Caco-2 (cell line): ENCODE measurements at regions of chr4 and their contacts with region 1.

Region 1: DNA sequence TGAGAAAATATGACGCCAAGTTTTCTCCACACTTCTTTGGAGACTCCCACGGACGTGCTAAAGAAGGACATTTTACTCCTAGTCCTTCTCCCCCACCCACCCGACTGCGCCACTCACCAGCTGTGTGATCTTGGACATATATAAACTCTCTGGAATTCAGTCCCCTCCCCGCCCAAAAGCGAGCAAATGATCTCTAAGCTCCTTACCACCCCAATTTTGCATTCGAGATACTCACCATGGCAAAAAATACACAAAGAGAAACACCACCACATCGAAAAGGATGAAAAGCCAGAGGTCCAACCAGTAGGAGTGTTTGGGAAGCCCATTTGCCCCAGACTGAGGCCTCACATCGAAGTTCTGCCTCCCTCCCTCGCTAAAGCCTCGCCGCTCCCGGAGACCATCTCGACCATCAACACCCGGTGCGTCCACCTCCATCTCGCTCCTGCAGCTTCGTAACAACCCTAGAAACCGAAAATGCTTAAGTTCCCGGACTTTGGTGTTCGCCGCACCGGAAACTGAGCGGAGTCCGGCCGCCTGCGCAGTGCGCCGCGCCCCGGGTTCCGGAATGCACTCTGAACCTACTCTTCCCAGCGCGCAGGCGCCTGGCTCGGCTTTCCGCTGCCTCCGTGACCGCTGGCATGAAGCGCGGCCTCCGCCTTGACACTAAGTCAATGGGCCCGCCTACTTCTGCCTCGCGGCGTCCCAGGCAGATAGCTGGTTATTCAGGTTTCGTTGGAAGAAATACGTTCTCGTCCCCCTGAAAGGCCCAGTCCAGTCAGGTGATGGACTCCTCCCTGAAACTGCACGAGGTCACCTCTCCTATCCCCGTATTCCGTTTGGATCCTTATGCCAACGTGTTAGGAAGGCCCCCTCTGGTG is 21.6 kb downstream of the FABP2 start:
- DNase-seq: peak; percentile 97 to 98
- H3K4me3 ChIP-seq: peak overlapping the region; percentile 72
- H3K4me3 Mint-ChIP-seq: peak overlapping the region; percentile 99
- H3K27ac Mint-ChIP-seq: peak overlapping the region; percentile 99
- H3K4me1 ChIP-seq: no peaks in the 10 kb centered on the region
- H3K4me1 Mint-ChIP-seq: peaks cover 11% of the 10 kb centered on the region
- H3K27me3 ChIP-seq: no peaks in the 10 kb centered on the region
- H3K27me3 Mint-ChIP-seq: no peaks in the 10 kb centered on the region
- CTCF ChIP-seq: peak; percentile 36 to 41

Region 2: GRCh38 chr4:118810991-118811764 is 489.2 kb before region 1 on chr4:
- CTCF ChIA-PET with region 1: no interaction called
- POLR2A ChIA-PET with region 1: no interaction called
- intact Hi-C with region 1: no loop called
- DNase-seq: no peak
- H3K4me3 ChIP-seq: no peak overlapping the region
- H3K4me3 Mint-ChIP-seq: no peak overlapping the region
- H3K27ac Mint-ChIP-seq: no peak overlapping the region
- H3K4me1 ChIP-seq: no peaks in the 10 kb centered on the region
- H3K4me1 Mint-ChIP-seq: no peaks in the 10 kb centered on the region
- H3K27me3 ChIP-seq: no peaks in the 10 kb centered on the region
- H3K27me3 Mint-ChIP-seq: no peaks in the 10 kb centered on the region
- CTCF ChIP-seq: no peak

Region 3: DNA sequence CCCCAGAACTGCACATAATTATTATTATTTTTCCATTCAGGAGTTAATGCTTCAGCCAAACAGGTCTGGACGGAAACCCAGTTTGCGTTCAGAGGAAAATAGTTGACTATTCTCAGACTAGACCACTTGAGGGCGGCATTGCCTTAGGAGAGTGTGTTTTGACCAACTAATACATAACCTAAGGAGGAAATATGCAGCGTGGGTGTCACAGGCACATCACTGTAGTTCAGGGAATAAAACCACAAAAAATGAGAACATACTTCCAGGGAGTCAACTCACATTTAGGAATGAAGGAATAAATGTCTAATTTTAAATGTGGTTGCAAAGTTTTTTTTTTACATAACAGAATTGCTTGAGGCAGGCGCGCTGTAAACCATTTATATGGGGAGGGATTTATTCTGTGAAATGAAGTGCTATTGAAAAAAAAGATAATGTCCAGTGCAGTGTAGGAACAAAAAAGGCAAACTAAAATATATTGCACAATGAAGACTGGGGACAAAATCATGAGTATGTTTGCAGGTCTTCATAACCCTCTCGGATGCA is 318.4 kb before region 1 on chr4:
- CTCF ChIA-PET with region 1: no interaction called
- POLR2A ChIA-PET with region 1: no interaction called
- intact Hi-C with region 1: loop called (anchors 1 kb)
- DNase-seq: peak; percentile 52 to 70
- H3K4me3 ChIP-seq: no peak overlapping the region
- H3K4me3 Mint-ChIP-seq: no peak overlapping the region
- H3K27ac Mint-ChIP-seq: no peak overlapping the region
- H3K4me1 ChIP-seq: no peaks in the 10 kb centered on the region
- H3K4me1 Mint-ChIP-seq: no peaks in the 10 kb centered on the region
- H3K27me3 ChIP-seq: no peaks in the 10 kb centered on the region
- H3K27me3 Mint-ChIP-seq: no peaks in the 10 kb centered on the region
- CTCF ChIP-seq: peak; percentile 62 to 75

Region 4: DNA sequence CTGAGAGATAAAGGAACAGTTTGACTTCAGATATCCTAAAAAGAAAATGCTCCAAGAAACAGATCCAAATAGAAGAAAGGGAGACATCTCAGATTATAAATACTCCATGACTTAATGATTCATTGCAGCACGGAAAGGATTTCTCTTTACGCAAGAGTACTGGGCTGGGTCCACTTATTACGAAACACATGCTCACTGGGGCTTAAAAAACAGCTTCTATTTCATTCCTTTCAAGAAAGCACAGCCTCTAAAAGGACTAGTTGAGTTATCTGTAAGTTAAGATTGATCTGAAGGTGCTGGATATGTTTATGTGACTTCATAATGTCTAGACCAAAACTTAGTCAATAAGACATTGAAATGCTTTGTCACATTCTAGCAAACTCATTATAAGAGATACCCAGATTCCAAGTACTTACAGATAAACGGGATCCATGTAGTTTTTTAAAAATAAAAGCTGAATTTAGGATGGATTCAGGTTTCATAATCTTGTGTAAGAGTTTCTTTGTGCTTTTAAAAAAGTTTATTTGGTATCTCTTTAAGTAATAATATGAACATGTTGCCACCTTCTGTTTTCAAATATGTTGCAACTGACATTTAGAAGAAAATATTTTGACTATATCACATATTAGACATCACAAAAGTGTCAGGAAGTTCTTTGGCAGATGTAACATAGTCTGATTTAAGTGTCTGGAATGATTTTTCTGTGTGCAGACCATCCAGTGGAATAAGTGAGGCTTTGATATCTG is 274.3 kb before region 1 on chr4:
- CTCF ChIA-PET with region 1: no interaction called
- POLR2A ChIA-PET with region 1: interaction called, 3 read pairs
- intact Hi-C with region 1: loop called (anchors 5 kb)
- DNase-seq: peak in 1 of 2 experiments; percentile 33
- H3K4me3 ChIP-seq: no peak overlapping the region
- H3K4me3 Mint-ChIP-seq: peak overlapping the region; percentile 59
- H3K27ac Mint-ChIP-seq: peak overlapping the region; percentile 45
- H3K4me1 ChIP-seq: peaks cover 9% of the 10 kb centered on the region
- H3K4me1 Mint-ChIP-seq: no peaks in the 10 kb centered on the region
- H3K27me3 ChIP-seq: no peaks in the 10 kb centered on the region
- H3K27me3 Mint-ChIP-seq: no peaks in the 10 kb centered on the region
- CTCF ChIP-seq: no peak

Region 5: DNA sequence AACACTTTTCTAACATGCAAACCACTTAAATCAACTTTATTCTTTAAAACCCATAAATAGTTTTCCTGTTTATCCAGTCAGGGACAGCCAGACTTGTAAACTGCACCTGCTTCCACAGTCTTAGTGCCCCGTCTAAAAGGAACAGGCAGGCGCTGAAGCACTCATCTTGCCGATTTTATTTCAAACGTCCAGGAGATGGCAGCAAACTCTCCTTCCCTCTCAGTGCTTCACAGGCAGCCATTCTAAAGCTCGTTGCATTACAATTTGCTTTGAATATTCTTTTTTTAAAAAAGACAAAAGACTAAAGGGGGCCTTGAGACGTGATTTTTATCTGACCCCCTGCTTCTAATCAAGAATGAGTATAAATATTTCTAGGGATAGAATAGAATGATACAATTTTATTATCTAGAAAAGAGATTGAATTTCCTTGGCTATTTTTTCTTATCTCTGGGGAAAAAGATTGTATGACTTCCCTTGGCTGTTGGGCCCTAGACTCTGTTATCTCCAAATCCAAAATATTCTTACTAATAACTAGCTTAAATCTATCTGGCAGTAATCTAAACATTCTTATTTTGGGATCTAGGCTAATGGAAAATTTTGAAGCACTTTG is 258.3 kb before region 1 on chr4:
- CTCF ChIA-PET with region 1: interaction called, 5 read pairs
- POLR2A ChIA-PET with region 1: no interaction called
- intact Hi-C with region 1: loop called (anchors 1 kb)
- DNase-seq: peak; percentile 72 to 78
- H3K4me3 ChIP-seq: no peak overlapping the region
- H3K4me3 Mint-ChIP-seq: no peak overlapping the region
- H3K27ac Mint-ChIP-seq: no peak overlapping the region
- H3K4me1 ChIP-seq: peaks cover 10% of the 10 kb centered on the region
- H3K4me1 Mint-ChIP-seq: peaks cover 20% of the 10 kb centered on the region
- H3K27me3 ChIP-seq: no peaks in the 10 kb centered on the region
- H3K27me3 Mint-ChIP-seq: no peaks in the 10 kb centered on the region
- CTCF ChIP-seq: peak; percentile 62 to 77

Region 6: GRCh38 chr4:119053997-119054396 is 246.3 kb before region 1 on chr4:
- CTCF ChIA-PET with region 1: no interaction called
- POLR2A ChIA-PET with region 1: no interaction called
- intact Hi-C with region 1: no loop called
- DNase-seq: no peak
- H3K4me3 ChIP-seq: no peak overlapping the region
- H3K4me3 Mint-ChIP-seq: no peak overlapping the region
- H3K27ac Mint-ChIP-seq: no peak overlapping the region
- H3K4me1 ChIP-seq: peaks cover 4% of the 10 kb centered on the region
- H3K4me1 Mint-ChIP-seq: peaks cover 2% of the 10 kb centered on the region
- H3K27me3 ChIP-seq: no peaks in the 10 kb centered on the region
- H3K27me3 Mint-ChIP-seq: no peaks in the 10 kb centered on the region
- CTCF ChIP-seq: no peak

Region 7: GRCh38 chr4:119093042-119093827 is 207.1 kb before region 1 on chr4:
- CTCF ChIA-PET with region 1: no interaction called
- POLR2A ChIA-PET with region 1: no interaction called
- intact Hi-C with region 1: no loop called
- DNase-seq: peak; percentile 37 to 42
- H3K4me3 ChIP-seq: no peak overlapping the region
- H3K4me3 Mint-ChIP-seq: peak overlapping the region; percentile 28
- H3K27ac Mint-ChIP-seq: peak overlapping the region; percentile 86
- H3K4me1 ChIP-seq: peaks cover 34% of the 10 kb centered on the region
- H3K4me1 Mint-ChIP-seq: peaks cover 40% of the 10 kb centered on the region
- H3K27me3 ChIP-seq: no peaks in the 10 kb centered on the region
- H3K27me3 Mint-ChIP-seq: no peaks in the 10 kb centered on the region
- CTCF ChIP-seq: no peak

Region 8: GRCh38 chr4:119138046-119138445 is 162.3 kb before region 1 on chr4:
- CTCF ChIA-PET with region 1: no interaction called
- POLR2A ChIA-PET with region 1: interaction called, 8 read pairs
- intact Hi-C with region 1: loop called (anchors 5 kb)
- DNase-seq: peak in 1 of 2 experiments; percentile 33
- H3K4me3 ChIP-seq: no peak overlapping the region
- H3K4me3 Mint-ChIP-seq: no peak overlapping the region
- H3K27ac Mint-ChIP-seq: peak overlapping the region; percentile 70
- H3K4me1 ChIP-seq: peaks cover 60% of the 10 kb centered on the region
- H3K4me1 Mint-ChIP-seq: peaks cover 50% of the 10 kb centered on the region
- H3K27me3 ChIP-seq: no peaks in the 10 kb centered on the region
- H3K27me3 Mint-ChIP-seq: no peaks in the 10 kb centered on the region
- CTCF ChIP-seq: no peak

Region 9: DNA sequence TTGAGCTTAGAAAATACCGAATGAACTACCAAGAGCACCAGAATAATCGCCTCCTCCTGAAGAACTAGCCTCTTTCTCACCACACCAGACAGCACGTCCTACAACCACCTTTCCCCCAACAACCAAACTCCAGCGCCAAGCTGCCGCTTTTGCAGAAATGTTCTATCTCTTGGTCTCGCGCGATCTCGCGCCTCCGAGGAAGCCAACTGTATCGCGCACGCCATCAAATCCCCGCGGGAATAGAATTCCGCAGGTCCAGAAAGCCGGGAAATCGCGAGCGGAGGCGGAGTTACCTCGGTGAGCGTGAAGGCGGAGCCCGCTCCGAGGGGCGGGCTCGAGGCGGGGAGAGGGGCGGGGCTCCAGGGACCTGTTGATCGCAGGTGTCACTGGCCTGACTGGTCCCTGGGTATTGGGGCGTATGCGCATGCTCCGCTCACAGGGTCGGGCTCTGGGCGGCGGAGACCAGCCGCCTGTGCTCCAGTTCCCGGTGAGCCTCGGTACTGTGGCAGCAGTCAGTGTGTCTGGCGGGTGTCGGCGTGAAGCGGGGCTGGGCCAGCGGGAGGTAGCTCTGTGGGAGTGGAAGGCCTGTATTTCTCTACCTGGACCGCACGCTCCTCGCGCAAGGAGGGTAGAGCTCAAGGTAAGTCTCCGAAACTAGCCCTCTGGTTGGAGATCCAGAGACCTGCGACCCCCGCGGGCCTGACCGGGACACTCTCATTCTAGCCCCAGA is 87.9 kb before region 1 on chr4 and contains the start of gene USP53:
- CTCF ChIA-PET with region 1: interaction called, 5 read pairs
- POLR2A ChIA-PET with region 1: interaction called, 8 read pairs
- intact Hi-C with region 1: loop called (anchors 1 kb)
- DNase-seq: peak; percentile 98 to 99
- H3K4me3 ChIP-seq: peak within 1 kb of the TSS; percentile 77
- H3K4me3 Mint-ChIP-seq: peak within 1 kb of the TSS; percentile 95
- H3K27ac Mint-ChIP-seq: peak within 1 kb of the TSS; percentile 99
- H3K4me1 ChIP-seq: peaks cover 12% of the 10 kb centered on the region
- H3K4me1 Mint-ChIP-seq: peaks cover 28% of the 10 kb centered on the region
- H3K27me3 ChIP-seq: no peaks in the 10 kb centered on the region
- H3K27me3 Mint-ChIP-seq: no peaks in the 10 kb centered on the region
- CTCF ChIP-seq: no peak
- total RNA-seq, gene USP53: 45.3 and 49.3 TPM in 2 replicates

Region 10: DNA sequence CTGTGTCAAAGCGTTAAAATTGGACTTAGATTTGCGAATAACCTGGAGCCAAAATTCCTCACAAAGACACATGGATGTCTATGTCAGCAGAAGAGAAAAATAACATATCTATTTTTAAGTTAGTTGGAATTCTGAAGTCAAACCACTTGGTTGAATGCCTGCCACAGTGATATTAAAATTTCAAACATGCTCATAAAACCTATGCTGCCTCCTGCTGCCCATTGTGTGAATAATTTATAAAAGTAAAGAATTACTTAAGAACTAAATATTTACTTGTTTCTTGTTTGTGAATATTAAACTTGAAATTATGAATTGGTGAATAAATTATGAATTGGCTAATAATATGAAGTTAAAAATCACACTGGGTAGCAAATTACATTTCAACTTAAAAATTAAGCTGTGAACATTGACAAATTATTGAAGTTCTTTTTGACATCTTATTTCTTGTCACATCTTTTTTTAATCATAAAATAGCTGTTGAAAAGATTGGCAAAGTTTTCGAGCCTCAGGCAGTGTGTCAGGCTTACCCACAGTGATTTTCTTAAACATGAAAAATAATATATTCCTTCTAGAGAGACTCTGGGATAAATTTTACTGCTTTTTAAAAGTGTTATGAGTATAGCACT is 13.8 kb before region 1 on chr4:
- CTCF ChIA-PET with region 1: interaction called, 3 read pairs
- POLR2A ChIA-PET with region 1: no interaction called
- intact Hi-C with region 1: loop called (anchors 1 kb)
- DNase-seq: no peak
- H3K4me3 ChIP-seq: no peak overlapping the region
- H3K4me3 Mint-ChIP-seq: no peak overlapping the region
- H3K27ac Mint-ChIP-seq: no peak overlapping the region
- H3K4me1 ChIP-seq: peaks cover 10% of the 10 kb centered on the region
- H3K4me1 Mint-ChIP-seq: peaks cover 19% of the 10 kb centered on the region
- H3K27me3 ChIP-seq: no peaks in the 10 kb centered on the region
- H3K27me3 Mint-ChIP-seq: no peaks in the 10 kb centered on the region
- CTCF ChIP-seq: peak; percentile 34 to 52